GM10248 (cell line): ENCODE measurements at regions of chr11 and their contacts with region 1.

Region 1: DNA sequence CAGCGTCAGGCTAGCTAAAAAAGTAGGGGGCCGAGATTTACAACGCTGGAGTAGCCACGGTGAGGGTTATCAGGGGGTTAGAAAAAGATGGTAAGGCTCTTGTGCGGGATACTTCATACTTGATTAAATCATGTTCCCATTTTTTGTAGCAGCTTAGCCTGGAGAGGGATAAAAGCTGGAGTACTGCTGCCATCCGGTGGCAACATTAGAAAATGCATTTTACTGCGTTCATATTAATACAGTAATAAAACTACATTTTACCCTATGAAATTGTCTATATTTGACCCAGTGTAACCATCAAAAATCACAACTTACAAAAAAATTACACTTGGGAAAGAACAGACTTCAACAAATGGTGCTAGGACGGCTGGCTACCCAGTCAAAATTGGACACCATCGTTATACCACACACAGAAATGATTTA is 17.3 kb downstream of the RPUSD4 start:
- DNase-seq: no peak
- CTCF ChIP-seq: peak; percentile 61

Region 2: DNA sequence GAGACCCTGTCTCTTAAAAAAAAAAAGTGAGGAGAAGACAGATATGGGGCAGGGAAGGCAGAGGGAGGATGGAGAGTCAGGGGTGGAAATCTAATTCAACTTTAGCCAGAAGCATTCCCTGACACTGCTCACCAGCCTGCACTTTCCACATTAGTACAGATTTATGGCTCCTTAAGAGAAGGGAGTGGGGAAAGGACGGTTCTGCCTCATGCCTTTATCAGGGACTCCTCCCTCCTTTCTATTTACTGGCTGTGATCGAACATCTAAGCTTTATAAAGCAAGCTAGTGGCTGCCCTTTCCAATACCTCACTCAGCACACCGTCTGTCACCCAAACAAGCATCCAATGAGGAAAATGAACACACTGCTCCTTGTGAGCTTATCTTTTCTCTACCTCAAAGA is 361.1 kb before region 1 on chr11 and contains the start of gene PATE4:
- CTCF ChIA-PET with region 1: no interaction called
- POLR2A ChIA-PET with region 1: no interaction called
- DNase-seq: no peak
- CTCF ChIP-seq: no peak

Region 3: GRCh38 chr11:125923012-125923579 is 271.0 kb before region 1 on chr11:
- CTCF ChIA-PET with region 1: interaction called, 69 read pairs
- POLR2A ChIA-PET with region 1: no interaction called
- DNase-seq: peak; percentile 73
- CTCF ChIP-seq: peak; percentile 84

Region 4: DNA sequence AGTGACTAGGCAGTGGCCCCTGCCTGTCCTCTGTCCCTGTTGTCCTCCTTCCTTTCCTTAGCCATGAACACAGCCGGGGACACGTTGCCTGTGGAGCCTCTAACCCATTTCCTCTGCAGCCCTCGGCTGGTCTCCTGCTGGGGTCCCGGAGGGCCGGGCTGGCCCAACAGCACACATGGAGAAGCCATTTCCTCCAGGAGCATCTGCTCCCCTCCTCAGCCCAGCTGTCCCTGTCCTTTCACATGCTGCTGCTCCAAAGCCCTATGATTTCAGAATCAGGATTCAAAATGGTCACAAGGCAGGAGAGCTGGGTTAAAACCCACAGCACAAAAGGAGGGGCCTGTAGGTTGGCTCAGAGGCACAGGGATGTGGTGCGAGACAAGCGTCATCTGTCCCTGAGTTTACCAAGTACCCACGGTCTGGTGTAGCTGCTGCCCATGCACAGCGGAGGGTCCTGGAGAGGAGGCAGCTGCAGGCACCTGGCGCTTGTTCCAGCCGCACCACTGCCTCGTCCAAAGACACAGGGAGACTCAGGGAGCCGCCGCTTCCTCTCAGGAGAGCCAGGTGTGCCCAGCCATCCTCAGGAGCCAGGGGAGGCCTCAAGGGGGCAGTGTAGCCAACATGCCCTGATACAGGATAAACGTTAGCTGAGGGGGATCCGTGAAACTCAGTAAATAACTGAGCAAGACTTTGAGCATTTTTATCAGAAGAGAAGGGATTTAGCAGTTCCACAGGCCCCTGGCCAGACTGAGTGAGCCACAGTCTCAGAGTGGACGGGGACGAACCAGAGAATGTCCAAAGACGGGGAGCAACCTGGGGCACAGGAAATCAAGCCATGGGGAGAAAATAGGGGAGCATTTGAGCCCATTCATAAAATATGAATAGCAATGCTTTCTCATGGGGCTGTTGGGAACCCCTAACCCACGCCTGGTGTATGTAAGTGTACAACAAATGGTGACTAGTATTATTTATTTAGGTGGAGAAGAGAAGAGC is 252.2 kb before region 1 on chr11:
- CTCF ChIA-PET with region 1: interaction called, 63 read pairs
- POLR2A ChIA-PET with region 1: no interaction called
- DNase-seq: peak; percentile 75
- CTCF ChIP-seq: peak; percentile 80

Region 5: DNA sequence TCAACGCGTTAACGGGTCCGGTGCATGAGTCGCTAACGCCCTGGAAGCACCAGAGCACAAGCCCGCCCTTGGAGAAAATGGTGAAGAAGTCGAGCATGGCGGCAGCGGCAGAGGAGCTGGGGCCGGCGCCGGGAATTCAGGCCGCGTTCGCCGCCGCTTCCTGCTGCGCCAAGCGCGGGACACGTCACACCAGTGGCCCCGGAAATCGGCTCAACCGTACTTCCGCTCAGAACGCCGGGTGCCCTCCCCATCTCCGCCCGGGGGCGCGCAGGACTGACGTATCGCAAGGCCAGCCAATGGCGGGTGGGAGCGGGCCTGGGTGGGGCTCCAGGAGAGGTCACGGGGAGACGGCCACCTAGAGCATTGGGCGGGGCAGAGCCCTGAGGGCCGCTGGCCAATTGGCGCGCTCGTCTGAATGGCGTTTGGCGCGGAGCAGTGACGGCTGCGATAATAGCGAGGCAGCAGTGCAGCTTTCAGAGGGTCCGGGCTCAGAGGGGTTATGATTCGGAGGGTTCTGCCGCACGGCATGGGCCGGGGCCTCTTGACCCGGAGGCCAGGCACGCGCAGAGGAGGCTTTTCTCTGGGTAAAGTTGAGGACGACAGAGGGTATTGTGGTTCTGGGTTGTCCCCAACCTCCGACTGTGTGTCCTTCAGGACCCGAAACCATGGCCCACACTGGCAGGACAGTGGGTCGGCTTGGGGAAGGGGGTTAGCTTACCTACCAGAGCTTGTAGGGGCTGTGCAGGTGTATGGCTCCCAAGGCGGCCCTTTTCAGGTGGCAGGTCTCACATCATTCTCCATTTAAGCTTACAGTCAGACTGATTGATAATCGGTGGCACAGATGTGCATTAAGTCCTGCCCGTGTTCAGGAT is 74.8 kb after region 1 on chr11 and contains the starts of genes FOXRED1 and SRPRA:
- CTCF ChIA-PET with region 1: no interaction called
- POLR2A ChIA-PET with region 1: no interaction called
- DNase-seq: peak; percentile 100
- CTCF ChIP-seq: no peak